ENCODE measurements at regions of chr2 and their contacts with region 1.

Region 1: GRCh38 chr2:218648088-218648786 is 11.2 kb downstream of the ZNF142 start:
- DNase-seq: peak; percentile 75
- H3K4me3 ChIP-seq: no peak overlapping the region
- H3K27ac ChIP-seq: no peak overlapping the region
- H3K4me1 ChIP-seq: peaks cover 6% of the 10 kb centered on the region
- H3K27me3 ChIP-seq: no peaks in the 10 kb centered on the region
- CTCF ChIP-seq: peak; percentile 81 to 91
- POLR2A ChIP-seq: no peak

Region 2: GRCh38 chr2:218406209-218406948 is 241.9 kb before region 1 on chr2:
- CTCF ChIA-PET with region 1: no interaction called
- POLR2A ChIA-PET with region 1: no interaction called
- dilution Hi-C with region 1: no loop called
- intact Hi-C with region 1: loop called (anchors 1 kb)
- DNase-seq: peak; percentile 94
- H3K4me3 ChIP-seq: peak overlapping the region; percentile 16 to 25 (median 18)
- H3K27ac ChIP-seq: peak overlapping the region; percentile 81
- H3K4me1 ChIP-seq: peaks cover 22% of the 10 kb centered on the region
- H3K27me3 ChIP-seq: no peaks in the 10 kb centered on the region
- CTCF ChIP-seq: peak; percentile 66 to 91
- POLR2A ChIP-seq: peak; percentile 80

Region 3: GRCh38 chr2:218583983-218584850 is 64.0 kb before region 1 on chr2:
- CTCF ChIA-PET with region 1: interaction called, 3 read pairs
- POLR2A ChIA-PET with region 1: no interaction called
- dilution Hi-C with region 1: no loop called
- intact Hi-C with region 1: loop called (anchors 1 kb)
- DNase-seq: peak; percentile 21
- H3K4me3 ChIP-seq: no peak overlapping the region
- H3K27ac ChIP-seq: no peak overlapping the region
- H3K4me1 ChIP-seq: peaks cover 5% of the 10 kb centered on the region
- H3K27me3 ChIP-seq: no peaks in the 10 kb centered on the region
- CTCF ChIP-seq: peak; percentile 8 to 16
- POLR2A ChIP-seq: no peak

Region 4: DNA sequence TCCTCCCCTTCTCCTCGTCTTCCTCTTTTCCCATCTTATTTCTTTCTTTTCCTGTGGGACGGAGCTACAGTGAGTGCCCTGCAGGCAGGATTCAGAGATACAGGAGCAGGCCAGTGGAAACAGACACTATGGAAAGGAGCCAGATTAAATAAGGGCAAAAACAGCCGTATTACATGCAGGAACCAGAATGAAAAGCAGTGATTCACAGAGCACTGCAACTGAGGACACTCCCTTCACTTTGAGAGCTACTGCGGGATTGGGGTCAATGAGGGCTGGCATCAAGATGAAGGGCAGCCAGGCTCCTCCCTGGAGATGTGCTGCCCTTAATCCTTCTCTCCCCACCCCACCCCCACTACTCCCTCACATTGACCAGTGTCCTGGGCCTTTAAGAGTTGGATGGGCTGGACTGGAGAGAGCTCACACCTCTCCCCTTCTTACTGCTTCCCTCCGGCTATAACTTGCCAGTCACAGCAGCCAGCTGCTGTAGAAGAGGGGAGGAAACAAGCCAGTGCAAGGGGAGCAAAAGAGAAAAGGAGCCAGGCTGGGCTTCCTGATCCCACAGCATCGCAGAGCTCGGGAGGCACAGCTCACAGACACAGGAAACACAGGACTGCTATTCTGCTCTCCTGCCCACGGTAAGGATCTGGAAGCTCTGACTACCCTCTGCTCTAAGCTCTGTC is 40.7 kb before region 1 on chr2 and contains the start of gene PLCD4:
- CTCF ChIA-PET with region 1: interaction called, 21 read pairs
- POLR2A ChIA-PET with region 1: no interaction called
- dilution Hi-C with region 1: no loop called
- intact Hi-C with region 1: no loop called
- DNase-seq: peak; percentile 79
- H3K4me3 ChIP-seq: no peak within 1 kb of the TSS
- H3K27ac ChIP-seq: no peak within 1 kb of the TSS
- H3K4me1 ChIP-seq: peaks cover 10% of the 10 kb centered on the region
- H3K27me3 ChIP-seq: peaks cover 0 to 2% of the 10 kb centered on the region in 2 experiments
- CTCF ChIP-seq: no peak
- POLR2A ChIP-seq: peak; percentile 41
- total RNA-seq, gene PLCD4: 1.4 and 3.1 TPM in 2 replicates

Region 5: GRCh38 chr2:218631837-218632236 is 16.4 kb before region 1 on chr2:
- CTCF ChIA-PET with region 1: interaction called, 4 read pairs
- POLR2A ChIA-PET with region 1: interaction called, 3 read pairs
- dilution Hi-C with region 1: no loop called
- intact Hi-C with region 1: loop called (anchors 1 kb)
- DNase-seq: peak; percentile 95
- H3K4me3 ChIP-seq: no peak overlapping the region
- H3K27ac ChIP-seq: peak overlapping the region; percentile 78
- H3K4me1 ChIP-seq: peaks cover 20% of the 10 kb centered on the region
- H3K27me3 ChIP-seq: no peaks in the 10 kb centered on the region
- CTCF ChIP-seq: no peak
- POLR2A ChIP-seq: peak; percentile 59

Region 6: GRCh38 chr2:218659258-218659987 is 11.2 kb after region 1 on chr2 and contains the starts of genes BCS1L and ZNF142:
- CTCF ChIA-PET with region 1: interaction called, 31 read pairs
- POLR2A ChIA-PET with region 1: interaction called, 5 read pairs
- dilution Hi-C with region 1: no loop called
- intact Hi-C with region 1: no loop called
- DNase-seq: peak; percentile 88
- H3K4me3 ChIP-seq: peak within 1 kb of the TSS; percentile 74 to 95 (median 87)
- H3K27ac ChIP-seq: peak within 1 kb of the TSS; percentile 24
- H3K4me1 ChIP-seq: peaks cover 9% of the 10 kb centered on the region
- H3K27me3 ChIP-seq: no peaks in the 10 kb centered on the region
- CTCF ChIP-seq: no peak
- POLR2A ChIP-seq: peak; percentile 73
- total RNA-seq, gene BCS1L: 43.0 and 57.4 TPM in 2 replicates
- total RNA-seq, gene ZNF142: 31.4 and 34.5 TPM in 2 replicates

Region 7: GRCh38 chr2:218876562-218877219 is 228.5 kb after region 1 on chr2:
- CTCF ChIA-PET with region 1: no interaction called
- POLR2A ChIA-PET with region 1: no interaction called
- dilution Hi-C with region 1: no loop called
- intact Hi-C with region 1: no loop called
- DNase-seq: peak; percentile 74
- H3K4me3 ChIP-seq: no peak overlapping the region
- H3K27ac ChIP-seq: no peak overlapping the region
- H3K4me1 ChIP-seq: no peaks in the 10 kb centered on the region
- H3K27me3 ChIP-seq: peaks cover 76 to 86% of the 10 kb centered on the region in 2 experiments
- CTCF ChIP-seq: peak; percentile 89 to 90
- POLR2A ChIP-seq: no peak

Measured in endothelial cell of umbilical vein (primary cell).